Activated CD4-positive, alpha-beta T cell treated with anti-CD3 and anti-CD28 coated beads, Interleukin-2, amount 10 ng/mL, durations not matched to agents 24 days and 14 days (primary cell): ENCODE measurements at regions of chr2 and their contacts with region 1.

Region 1: GRCh38 chr2:211157856-211158463 is 601.6 kb downstream of the CPS1 start:
- DNase-seq: peak; percentile 89
- H3K4me3 Mint-ChIP-seq: no peak overlapping the region
- H3K27ac Mint-ChIP-seq: no peak overlapping the region
- H3K4me1 Mint-ChIP-seq: no peaks in the 10 kb centered on the region
- H3K27me3 Mint-ChIP-seq: no peaks in the 10 kb centered on the region

Region 2: GRCh38 chr2:210456571-210456970 is 701.4 kb before region 1 on chr2:
- intact Hi-C with region 1: no loop called
- DNase-seq: no peak
- H3K4me3 Mint-ChIP-seq: no peak overlapping the region
- H3K27ac Mint-ChIP-seq: no peak overlapping the region
- H3K4me1 Mint-ChIP-seq: no peaks in the 10 kb centered on the region
- H3K27me3 Mint-ChIP-seq: no peaks in the 10 kb centered on the region

Region 3: DNA sequence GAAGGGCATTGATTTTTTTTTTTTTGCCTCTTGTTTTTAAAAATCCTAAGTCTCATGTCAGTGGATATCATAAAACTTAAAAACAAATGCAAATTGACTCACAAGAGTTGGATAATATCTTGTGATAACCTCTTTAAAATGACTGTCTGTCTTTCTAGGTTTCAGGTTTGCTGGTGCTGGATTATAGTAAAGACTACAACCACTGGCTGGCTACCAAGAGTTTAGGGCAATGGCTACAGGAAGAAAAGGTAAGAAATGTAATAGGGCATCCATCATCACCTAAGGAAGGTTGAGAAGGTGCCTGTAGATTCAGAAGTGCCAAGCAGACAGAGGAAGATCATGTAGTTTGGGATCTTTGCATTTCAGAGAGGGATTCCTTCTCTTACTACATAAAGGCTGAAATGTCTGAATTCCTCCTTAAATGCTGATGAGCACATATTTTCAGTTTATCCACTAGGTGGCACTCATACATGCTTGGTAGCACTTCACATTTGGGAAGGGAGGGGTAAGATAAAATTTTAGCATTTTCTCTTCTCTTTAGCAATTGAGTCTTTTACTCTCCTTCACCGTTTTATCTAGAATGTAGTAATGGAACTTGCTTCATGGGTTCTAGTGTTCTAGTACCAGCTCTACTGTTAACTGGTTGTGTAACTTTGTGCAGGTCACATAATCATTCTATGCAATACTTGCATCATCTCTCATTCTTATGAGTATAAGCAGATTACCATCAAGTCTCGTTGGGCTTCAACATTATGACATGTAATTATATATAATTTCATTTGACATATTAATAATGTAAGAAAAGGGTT is 580.5 kb before region 1 on chr2:
- intact Hi-C with region 1: loop called (anchors 1 kb)
- DNase-seq: peak; percentile 59
- H3K4me3 Mint-ChIP-seq: no peak overlapping the region
- H3K27ac Mint-ChIP-seq: no peak overlapping the region
- H3K4me1 Mint-ChIP-seq: no peaks in the 10 kb centered on the region
- H3K27me3 Mint-ChIP-seq: no peaks in the 10 kb centered on the region

Region 4: DNA sequence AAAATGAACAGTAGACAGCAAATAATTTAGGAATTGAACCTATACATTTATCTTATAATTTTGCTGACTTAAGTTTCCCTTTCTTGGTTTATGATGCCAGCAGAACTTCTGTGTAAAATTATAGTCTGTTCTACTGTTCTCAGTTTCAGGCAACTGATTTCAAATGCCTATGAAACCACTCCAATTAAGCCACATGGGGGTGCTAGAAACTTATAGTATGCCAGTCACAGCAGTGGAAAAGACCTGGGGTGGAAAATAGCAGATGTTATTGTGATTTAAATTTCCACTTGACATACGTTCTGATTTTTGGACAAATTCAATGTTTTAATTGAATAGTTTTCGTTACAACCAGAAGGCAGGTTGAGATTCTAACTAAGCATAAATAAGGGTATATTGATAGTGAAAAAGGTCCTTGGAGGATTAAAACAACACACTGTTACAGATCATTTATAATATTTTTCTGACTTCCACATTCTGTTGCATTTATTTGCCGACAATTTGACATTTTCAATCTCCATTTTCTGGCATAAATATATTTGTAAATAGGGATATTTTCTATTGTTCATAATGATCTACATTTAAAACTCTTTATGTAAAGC is 540.1 kb before region 1 on chr2:
- intact Hi-C with region 1: loop called (anchors 2 kb)
- DNase-seq: peak; percentile 62
- H3K4me3 Mint-ChIP-seq: no peak overlapping the region
- H3K27ac Mint-ChIP-seq: no peak overlapping the region
- H3K4me1 Mint-ChIP-seq: no peaks in the 10 kb centered on the region
- H3K27me3 Mint-ChIP-seq: no peaks in the 10 kb centered on the region

Region 5: GRCh38 chr2:211248847-211249246 is 90.9 kb after region 1 on chr2:
- intact Hi-C with region 1: no loop called
- DNase-seq: no peak
- H3K4me3 Mint-ChIP-seq: no peak overlapping the region
- H3K27ac Mint-ChIP-seq: no peak overlapping the region
- H3K4me1 Mint-ChIP-seq: no peaks in the 10 kb centered on the region
- H3K27me3 Mint-ChIP-seq: no peaks in the 10 kb centered on the region